A673 (cell line): ENCODE measurements at regions of chr4 and their contacts with region 1.

Region 1: DNA sequence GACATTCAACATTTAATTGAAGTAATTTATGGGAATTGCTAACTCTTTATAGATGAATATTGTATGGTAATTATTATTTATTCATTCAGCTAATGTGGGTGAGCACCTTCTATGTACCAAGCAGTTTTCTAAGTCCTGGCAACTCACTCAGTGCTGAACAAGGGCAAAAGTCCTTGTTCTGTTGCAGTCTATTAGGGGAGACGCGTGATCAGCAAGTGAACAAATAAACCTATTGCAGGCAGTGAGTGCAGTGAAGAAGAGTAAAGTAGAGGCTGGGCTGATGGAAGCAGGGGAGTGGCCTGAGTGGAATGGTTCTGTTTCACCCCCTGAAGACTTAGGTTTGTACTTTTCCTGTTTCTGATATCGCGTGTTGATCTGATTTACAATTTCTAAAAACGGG is 214.3 kb downstream of the RAPGEF2 start:
- DNase-seq: no peak
- H3K4me3 ChIP-seq: no peak overlapping the region
- H3K27ac ChIP-seq: no peak overlapping the region
- H3K4me1 ChIP-seq: no peaks in the 10 kb centered on the region
- H3K27me3 ChIP-seq: no peaks in the 10 kb centered on the region
- CTCF ChIP-seq: no peak

Region 2: DNA sequence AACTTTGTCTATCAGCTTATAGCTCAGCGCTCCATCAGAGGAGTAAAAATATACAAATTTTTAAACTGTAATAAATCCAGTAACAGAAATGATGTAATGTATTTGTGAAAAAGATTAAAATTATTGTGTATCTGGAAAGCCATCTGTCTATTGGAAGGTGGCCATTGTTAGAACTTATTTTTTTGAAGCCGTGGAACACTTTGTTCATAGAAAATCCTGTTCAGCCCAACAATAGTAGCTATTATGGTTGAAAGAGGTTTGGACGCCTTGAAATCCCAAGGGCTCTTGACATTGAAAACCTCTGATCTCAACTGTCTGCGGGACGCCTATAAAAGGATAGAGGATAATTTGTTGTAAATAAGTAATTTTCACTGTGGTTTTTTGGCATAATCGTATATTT is 116.0 kb before region 1 on chr4:
- CTCF ChIA-PET with region 1: no interaction called
- POLR2A ChIA-PET with region 1: no interaction called
- intact Hi-C with region 1: loop called (anchors 5 kb)
- DNase-seq: peak; percentile 21
- H3K4me3 ChIP-seq: no peak overlapping the region
- H3K27ac ChIP-seq: no peak overlapping the region
- H3K4me1 ChIP-seq: no peaks in the 10 kb centered on the region
- H3K27me3 ChIP-seq: no peaks in the 10 kb centered on the region
- CTCF ChIP-seq: no peak